Breast epithelium (tissue), 4 donors: ENCODE measurements at regions of chr1 and their contacts with region 1.

Region 1: GRCh38 chr1:5161372-5161771 is 507.0 kb downstream of the AJAP1 start:
- DNase-seq: no peak
- H3K4me3 ChIP-seq: no peak overlapping the region
- H3K27ac ChIP-seq: no peak overlapping the region
- H3K4me1 ChIP-seq: no peaks in the 10 kb centered on the region
- H3K27me3 ChIP-seq: peaks cover 0 to 43% of the 10 kb centered on the region in 2 donors
- CTCF ChIP-seq: no peak
- POLR2A ChIP-seq: no peak

Region 2: DNA sequence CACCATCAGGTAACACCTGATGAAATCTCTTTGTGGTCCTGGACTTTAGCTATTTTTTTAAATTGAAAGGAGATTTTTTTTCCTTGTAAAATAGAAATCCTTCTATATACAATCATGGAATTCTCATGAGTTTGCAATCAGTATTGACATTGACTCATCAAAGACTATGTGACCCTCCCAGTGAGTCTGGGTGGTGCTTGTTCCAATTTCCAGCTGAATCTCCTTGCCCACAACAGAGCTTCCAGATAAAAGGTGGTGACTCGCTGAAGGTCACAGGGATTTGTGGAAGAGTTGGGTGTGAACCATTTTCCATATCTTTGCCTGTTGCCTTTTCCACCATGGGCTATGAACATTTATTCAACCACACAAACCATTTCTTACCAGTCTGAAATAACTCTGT is 20.4 kb before region 1 on chr1:
- intact Hi-C with region 1: loop called (anchors 1 kb)
- DNase-seq: no peak
- H3K4me3 ChIP-seq: no peak overlapping the region
- H3K27ac ChIP-seq: no peak overlapping the region
- H3K4me1 ChIP-seq: no peaks in the 10 kb centered on the region
- H3K27me3 ChIP-seq: peaks cover 0 to 46% of the 10 kb centered on the region in 2 donors
- CTCF ChIP-seq: no peak
- POLR2A ChIP-seq: no peak

Region 3: GRCh38 chr1:5536776-5537175 is 375.4 kb after region 1 on chr1:
- intact Hi-C with region 1: no loop called
- DNase-seq: no peak
- H3K4me3 ChIP-seq: no peak overlapping the region
- H3K27ac ChIP-seq: no peak overlapping the region
- H3K4me1 ChIP-seq: no peaks in the 10 kb centered on the region
- H3K27me3 ChIP-seq: no peaks in the 10 kb centered on the region
- CTCF ChIP-seq: no peak
- POLR2A ChIP-seq: no peak